Testis (tissue), 5 donors: ENCODE measurements at regions of chr6 and their contacts with region 1.

Region 1: DNA sequence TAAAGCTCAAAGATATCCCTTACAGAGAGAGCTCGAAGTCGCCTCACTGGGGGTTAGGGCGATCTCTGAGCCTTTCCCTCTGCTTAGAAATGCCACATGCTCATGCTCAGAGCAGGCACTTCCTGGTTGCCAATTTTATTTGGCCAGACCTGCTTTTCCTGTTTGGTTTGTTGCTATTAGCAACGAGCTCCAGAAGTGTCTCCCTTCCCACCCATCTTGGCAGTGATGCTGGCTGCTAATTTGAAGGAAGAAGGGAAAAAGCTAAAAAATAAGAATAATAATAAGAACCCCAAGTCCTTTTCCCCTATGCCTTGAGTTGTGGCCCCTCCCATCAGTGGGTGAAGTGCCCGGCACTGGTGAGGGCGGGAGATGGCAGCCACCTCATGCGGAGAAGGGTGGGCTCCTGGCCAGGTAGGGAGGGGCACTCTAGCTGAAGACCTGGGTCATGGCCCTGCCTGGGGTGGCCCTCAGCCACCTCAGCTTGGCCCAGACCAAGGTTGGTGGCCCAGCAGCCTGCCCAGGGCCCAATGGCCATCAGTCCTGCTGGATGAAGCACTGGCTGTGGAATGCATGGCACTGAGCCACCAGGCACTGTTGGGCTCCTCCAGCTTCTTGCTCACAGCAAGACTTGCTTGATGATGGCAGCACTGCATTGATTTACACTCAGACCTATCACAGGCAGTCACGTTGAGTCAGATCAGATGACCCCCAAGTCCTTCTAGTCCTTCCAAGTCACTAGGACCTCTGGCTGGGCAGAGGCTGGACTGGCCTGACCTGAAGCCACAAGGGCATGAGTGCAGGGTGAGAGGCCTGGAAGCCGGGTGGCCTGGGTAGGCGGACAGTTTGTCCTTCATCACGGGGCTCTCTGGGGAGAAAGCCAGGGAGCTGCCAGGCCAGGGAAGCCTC is 79.0 kb downstream of the SYNJ2 start:
- DNase-seq: peak; percentile 66
- H3K4me3 ChIP-seq: no peak overlapping the region
- H3K27ac ChIP-seq: peak overlapping the region in 1 of 2 donors; percentile 53
- H3K4me1 ChIP-seq: peaks cover 7% of the 10 kb centered on the region
- H3K27me3 ChIP-seq: no peaks in the 10 kb centered on the region
- CTCF ChIP-seq: no peak
- POLR2A ChIP-seq: no peak

Region 2: GRCh38 chr6:157981395-157982296 is 79.1 kb before region 1 on chr6 and contains the start of gene SYNJ2:
- intact Hi-C with region 1: loop called (anchors 10 kb)
- DNase-seq: peak; percentile 75
- H3K4me3 ChIP-seq: peak within 1 kb of the TSS; percentile 72 to 78
- H3K27ac ChIP-seq: peak within 1 kb of the TSS in 1 of 2 donors; percentile 53
- H3K4me1 ChIP-seq: peaks cover 11% of the 10 kb centered on the region
- H3K27me3 ChIP-seq: no peaks in the 10 kb centered on the region
- CTCF ChIP-seq: peak in 2 of 3 experiments; percentile 37 to 44
- POLR2A ChIP-seq: no peak
- total RNA-seq, gene SYNJ2: 5.8 to 7.6 TPM

Region 3: DNA sequence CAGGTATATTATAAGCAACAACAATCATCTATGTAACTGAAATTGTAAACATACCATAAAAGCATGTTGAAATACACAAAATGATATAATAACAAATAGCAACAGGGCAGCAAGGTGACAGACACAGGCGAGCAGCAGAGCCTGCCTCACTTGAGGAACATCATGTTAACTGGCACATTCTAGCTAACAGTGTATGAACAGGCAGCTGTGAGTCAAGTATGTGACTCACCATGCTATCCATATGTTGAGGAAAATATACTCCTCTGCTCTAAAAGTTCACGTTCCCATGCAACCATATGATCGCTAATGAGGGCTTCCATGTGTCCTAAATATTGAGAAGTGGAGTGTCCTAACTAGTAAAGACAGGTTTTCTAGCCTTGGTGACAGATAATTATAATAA is 88.9 kb after region 1 on chr6:
- intact Hi-C with region 1: no loop called
- DNase-seq: no peak
- H3K4me3 ChIP-seq: no peak overlapping the region
- H3K27ac ChIP-seq: no peak overlapping the region
- H3K4me1 ChIP-seq: no peaks in the 10 kb centered on the region
- H3K27me3 ChIP-seq: no peaks in the 10 kb centered on the region
- CTCF ChIP-seq: no peak
- POLR2A ChIP-seq: no peak

Region 4: DNA sequence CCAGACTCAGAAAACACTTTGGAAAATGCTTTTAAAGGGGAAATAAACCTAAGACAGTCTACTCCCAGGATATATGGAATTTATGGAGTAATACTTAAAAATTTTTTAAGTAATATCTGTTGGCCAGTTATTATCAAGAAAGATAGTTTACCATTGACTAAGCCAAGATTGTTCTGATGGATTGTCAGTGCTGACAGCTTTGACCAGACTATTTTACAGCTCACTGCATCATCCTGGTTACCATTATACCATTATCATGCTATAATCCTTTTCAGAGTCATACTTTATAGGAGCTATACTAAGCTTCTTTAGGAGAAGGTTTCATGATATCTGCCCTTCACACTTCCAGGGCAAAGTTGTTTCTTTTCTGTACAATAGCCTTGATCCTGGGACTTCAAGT is 123.9 kb after region 1 on chr6:
- intact Hi-C with region 1: no loop called
- DNase-seq: no peak
- H3K4me3 ChIP-seq: no peak overlapping the region
- H3K27ac ChIP-seq: no peak overlapping the region
- H3K4me1 ChIP-seq: peaks cover 4% of the 10 kb centered on the region
- H3K27me3 ChIP-seq: no peaks in the 10 kb centered on the region
- CTCF ChIP-seq: no peak
- POLR2A ChIP-seq: no peak

Region 5: DNA sequence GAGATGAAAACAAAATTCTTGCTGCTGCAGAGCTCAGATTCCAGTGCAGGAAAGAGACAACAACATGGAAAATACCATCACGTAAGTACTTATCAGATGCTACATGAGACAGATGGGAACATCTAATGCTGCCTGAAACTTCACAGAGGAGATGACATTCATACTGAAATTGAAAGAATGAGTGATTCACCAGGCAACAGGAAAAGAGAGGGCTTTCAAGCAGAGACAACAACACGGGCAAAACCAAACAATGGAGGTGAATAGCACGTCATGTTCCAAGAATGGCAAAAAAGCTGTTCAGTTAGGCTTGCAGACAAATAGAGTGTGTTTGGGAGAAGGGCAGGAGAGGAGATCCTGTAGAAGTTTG is 146.7 kb after region 1 on chr6:
- intact Hi-C with region 1: no loop called
- DNase-seq: no peak
- H3K4me3 ChIP-seq: no peak overlapping the region
- H3K27ac ChIP-seq: no peak overlapping the region
- H3K4me1 ChIP-seq: no peaks in the 10 kb centered on the region
- H3K27me3 ChIP-seq: no peaks in the 10 kb centered on the region
- CTCF ChIP-seq: no peak
- POLR2A ChIP-seq: no peak